ENCODE measurements at regions of chrX and their contacts with region 1.

Region 1: GRCh38 chrX:147911192-147912022 is at the start of gene FMR1:
- DNase-seq: peak; percentile 93 to 96 (median 94)
- ATAC-seq: peak; percentile 92 to 98 (median 96)
- H3K4me3 ChIP-seq: peak within 1 kb of the TSS; percentile 53 to 97 (median 76)
- H3K27ac ChIP-seq: peak within 1 kb of the TSS; percentile 77 to 93 (median 87)
- H3K4me1 ChIP-seq: peaks cover 0 to 31% (median 6%) of the 10 kb centered on the region in 12 donors
- H3K27me3 ChIP-seq: no peaks in the 10 kb centered on the region
- CTCF ChIP-seq: no peak
- POLR2A ChIP-seq: peak in 1 of 2 donors; percentile 53
- total RNA-seq, gene FMR1: 14.4 to 35.7 (median 25.4) TPM

Region 2: GRCh38 chrX:147848016-147848415 is 63.4 kb before region 1 on chrX:
- intact Hi-C with region 1: no loop called
- DNase-seq: no peak
- ATAC-seq: no peak
- H3K4me3 ChIP-seq: no peak overlapping the region
- H3K27ac ChIP-seq: no peak overlapping the region
- H3K4me1 ChIP-seq: no peaks in the 10 kb centered on the region
- H3K27me3 ChIP-seq: no peaks in the 10 kb centered on the region
- CTCF ChIP-seq: no peak
- POLR2A ChIP-seq: no peak

Region 3: GRCh38 chrX:148035380-148035779 is 124.0 kb after region 1 on chrX:
- intact Hi-C with region 1: loop called in 1 of 10 experiments (anchors 5 kb)
- DNase-seq: peak in 1 of 5 donors; percentile 39
- ATAC-seq: peak; percentile 78 to 96 (median 91)
- H3K4me3 ChIP-seq: no peak overlapping the region
- H3K27ac ChIP-seq: peak overlapping the region in 6 of 12 donors; percentile 43 to 76 (median 61)
- H3K4me1 ChIP-seq: peaks cover 0 to 3% (median 0%) of the 10 kb centered on the region in 12 donors
- H3K27me3 ChIP-seq: no peaks in the 10 kb centered on the region
- CTCF ChIP-seq: no peak
- POLR2A ChIP-seq: no peak